Mammary epithelial cell (primary cell): ENCODE measurements at regions of chr9 and their contacts with region 1.

Region 1: GRCh38 chr9:95574176-95574575 is 57.4 kb upstream of the PTCH1 start:
- DNase-seq: no peak
- H3K4me3 ChIP-seq: no peak overlapping the region
- H3K27ac ChIP-seq: no peak overlapping the region
- H3K4me1 ChIP-seq: no peaks in the 10 kb centered on the region
- H3K27me3 ChIP-seq: no peaks in the 10 kb centered on the region
- CTCF ChIP-seq: no peak

Region 2: DNA sequence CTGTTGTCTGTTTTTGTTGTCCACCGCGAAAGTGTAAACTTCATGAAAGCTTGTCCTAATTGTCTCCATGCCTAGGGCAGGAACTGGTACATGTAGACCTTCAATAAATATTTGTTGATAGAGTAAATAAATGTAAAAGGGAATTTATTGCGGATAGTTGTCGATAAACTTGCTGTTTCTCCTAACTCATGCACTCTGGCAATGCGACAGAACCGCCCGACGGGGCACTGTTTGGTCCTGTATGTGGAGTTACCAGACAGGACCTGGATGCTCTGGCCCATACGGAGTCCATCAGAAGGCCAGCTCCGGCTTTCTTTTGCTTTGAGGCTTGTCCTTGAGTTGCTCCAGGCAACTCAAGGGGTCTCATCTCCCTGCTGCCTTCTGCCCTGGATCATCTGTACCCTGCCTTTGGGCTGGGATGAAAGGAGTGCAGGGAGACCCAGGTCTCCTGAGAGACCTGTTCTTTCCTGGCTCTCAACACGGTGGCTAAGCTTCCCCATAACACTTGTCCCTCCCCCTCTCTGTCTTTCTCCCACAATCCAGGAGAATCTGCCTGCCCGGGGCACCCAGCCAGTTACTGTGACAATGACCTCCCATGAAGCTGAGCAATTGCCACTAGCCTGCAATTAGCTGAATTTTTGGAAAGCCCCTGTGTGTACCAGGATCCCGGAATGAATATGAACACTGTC is 92.1 kb after region 1 on chr9:
- CTCF ChIA-PET with region 1: no interaction called
- dilution Hi-C with region 1: no loop called
- in situ Hi-C with region 1: no loop called
- intact Hi-C with region 1: no loop called
- DNase-seq: no peak
- H3K4me3 ChIP-seq: no peak overlapping the region
- H3K27ac ChIP-seq: no peak overlapping the region
- H3K4me1 ChIP-seq: no peaks in the 10 kb centered on the region
- H3K27me3 ChIP-seq: peaks cover 9% of the 10 kb centered on the region
- CTCF ChIP-seq: no peak

Region 3: DNA sequence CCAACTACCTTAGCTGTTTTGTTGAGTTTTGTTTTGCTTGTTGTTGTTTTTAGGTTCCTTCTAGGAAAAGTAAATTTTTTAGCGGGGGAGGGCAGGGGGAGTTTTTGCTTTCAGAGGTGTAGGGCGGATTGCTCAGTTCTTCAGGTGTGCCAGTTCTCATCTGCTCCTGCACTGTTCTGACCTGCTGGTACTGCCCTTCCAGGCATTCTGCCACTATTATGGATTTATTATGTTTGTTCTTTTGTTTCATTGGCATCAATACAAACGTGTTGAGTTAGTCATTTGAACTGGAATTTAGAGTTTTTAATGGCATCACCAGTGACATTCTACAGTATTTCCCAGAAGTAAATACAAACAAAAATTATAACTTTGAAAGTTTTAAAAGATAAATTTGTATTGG is 327.3 kb after region 1 on chr9:
- CTCF ChIA-PET with region 1: interaction called, 11 read pairs
- dilution Hi-C with region 1: no loop called
- in situ Hi-C with region 1: no loop called
- intact Hi-C with region 1: no loop called
- DNase-seq: peak; percentile 28
- H3K4me3 ChIP-seq: no peak overlapping the region
- H3K27ac ChIP-seq: no peak overlapping the region
- H3K4me1 ChIP-seq: peaks cover 9% of the 10 kb centered on the region
- H3K27me3 ChIP-seq: no peaks in the 10 kb centered on the region
- CTCF ChIP-seq: no peak